H1 (cell line): ENCODE measurements at regions of chr2 and their contacts with region 1.

Region 1: GRCh38 chr2:197717858-197718257 is 12.7 kb downstream of the MARS2 start:
- DNase-seq: no peak
- H3K4me3 ChIP-seq: no peak overlapping the region
- H3K27ac ChIP-seq: no peak overlapping the region
- H3K4me1 ChIP-seq: no peaks in the 10 kb centered on the region
- H3K27me3 ChIP-seq: peaks cover 0 to 1% (median 0%) of the 10 kb centered on the region in 4 experiments; a peak in 1 of 7 replicates
- CTCF ChIP-seq: no peak
- EP300 ChIP-seq: no peak
- POLR2A ChIP-seq: no peak
- RAD21 ChIP-seq: no peak

Region 2: DNA sequence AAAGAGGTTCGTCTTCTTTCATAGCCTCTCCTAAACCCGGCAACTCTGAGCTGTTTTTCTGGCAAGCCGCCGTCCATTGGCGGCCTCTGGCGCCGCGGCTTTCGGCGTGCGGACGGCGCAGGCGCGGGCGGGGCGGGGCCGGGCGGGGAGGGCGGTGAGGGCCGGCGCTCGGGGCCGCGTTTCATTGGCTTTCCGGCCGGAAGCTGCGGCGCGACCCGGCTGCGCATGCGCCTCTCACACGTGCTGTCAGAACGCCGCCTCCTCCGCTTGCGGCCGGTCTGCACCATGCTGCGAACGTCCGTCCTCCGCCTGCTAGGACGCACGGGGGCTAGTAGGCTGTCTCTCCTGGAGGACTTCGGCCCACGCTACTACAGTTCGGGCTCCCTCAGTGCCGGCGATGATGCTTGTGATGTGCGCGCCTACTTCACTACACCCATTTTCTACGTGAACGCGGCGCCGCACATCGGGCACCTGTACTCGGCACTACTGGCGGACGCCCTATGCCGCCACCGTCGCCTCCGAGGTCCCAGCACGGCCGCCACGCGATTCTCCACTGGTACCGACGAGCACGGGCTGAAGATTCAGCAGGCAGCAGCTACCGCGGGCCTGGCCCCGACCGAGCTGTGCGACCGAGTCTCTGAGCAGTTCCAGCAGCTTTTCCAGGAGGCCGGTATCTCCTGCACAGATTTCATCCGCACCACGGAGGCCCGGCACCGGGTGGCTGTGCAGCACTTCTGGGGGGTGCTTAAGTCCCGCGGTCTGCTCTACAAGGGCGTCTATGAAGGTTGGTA is 12.5 kb before region 1 on chr2 and contains the start of gene MARS2:
- CTCF ChIA-PET with region 1: interaction called, 18 read pairs
- POLR2A ChIA-PET with region 1: interaction called, 5 read pairs
- DNase-seq: peak; percentile 85 to 91
- H3K4me3 ChIP-seq: peak within 1 kb of the TSS; percentile 85 to 92 (median 90)
- H3K27ac ChIP-seq: 0 out of 2 replicates have a peak within 1 kb of the TSS, but pooled peaks have one; percentile 12
- H3K4me1 ChIP-seq: peaks cover 0 to 7% (median 5%) of the 10 kb centered on the region in 4 experiments; a peak in 4 of 7 replicates
- H3K27me3 ChIP-seq: no peaks in the 10 kb centered on the region; a peak in 1 of 7 replicates
- CTCF ChIP-seq: no peak
- EP300 ChIP-seq: no peak
- POLR2A ChIP-seq: peak; percentile 85 to 89
- RAD21 ChIP-seq: peak in 1 of 2 experiments; percentile 10; a peak in 2 of 4 replicates
- total RNA-seq, gene MARS2: 26.8 and 27.2 TPM in 2 replicates

Region 3: DNA sequence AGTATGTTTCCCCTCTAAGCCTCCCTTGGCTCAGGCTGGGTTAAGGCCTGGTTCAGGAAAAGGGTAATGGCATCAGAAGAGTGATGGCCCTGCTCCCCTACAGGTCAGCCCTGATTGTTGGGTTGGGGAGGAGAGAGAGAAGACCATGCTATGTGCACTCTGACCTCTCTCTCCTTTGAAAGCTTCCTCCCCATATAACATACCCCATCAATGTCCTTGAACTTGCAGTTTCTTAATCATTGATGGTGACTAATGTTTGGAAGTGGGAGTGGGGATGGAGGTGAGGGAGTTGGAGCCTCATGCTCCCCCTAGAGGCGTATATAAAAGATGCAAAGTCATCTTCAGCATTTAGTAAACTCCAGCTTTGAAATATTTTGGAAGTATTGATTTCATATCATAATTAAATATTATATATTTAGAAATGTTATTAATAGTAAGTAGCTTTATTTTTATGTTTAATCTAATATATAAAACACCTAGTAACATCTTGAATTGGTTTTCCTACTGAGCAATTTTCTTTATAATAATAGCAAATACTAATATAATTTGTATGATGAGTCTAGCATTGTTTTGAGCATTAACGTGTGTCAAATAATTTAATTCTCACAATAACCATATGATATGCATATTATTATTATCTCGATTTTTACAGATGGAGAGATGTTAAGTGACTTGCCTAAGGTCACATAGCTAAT is 95.4 kb after region 1 on chr2:
- CTCF ChIA-PET with region 1: no interaction called
- POLR2A ChIA-PET with region 1: no interaction called
- DNase-seq: no peak
- H3K4me3 ChIP-seq: no peak overlapping the region
- H3K27ac ChIP-seq: no peak overlapping the region
- H3K4me1 ChIP-seq: no peaks in the 10 kb centered on the region
- H3K27me3 ChIP-seq: no peaks in the 10 kb centered on the region
- CTCF ChIP-seq: peak; percentile 38 to 53 (median 45); a peak in 3 of 4 replicates
- EP300 ChIP-seq: no peak
- POLR2A ChIP-seq: no peak
- RAD21 ChIP-seq: peak; percentile 21 to 44; a peak in 3 of 4 replicates